Pancreas (tissue), 10 donors: ENCODE measurements at regions of chr11 and their contacts with region 1.

Region 1: DNA sequence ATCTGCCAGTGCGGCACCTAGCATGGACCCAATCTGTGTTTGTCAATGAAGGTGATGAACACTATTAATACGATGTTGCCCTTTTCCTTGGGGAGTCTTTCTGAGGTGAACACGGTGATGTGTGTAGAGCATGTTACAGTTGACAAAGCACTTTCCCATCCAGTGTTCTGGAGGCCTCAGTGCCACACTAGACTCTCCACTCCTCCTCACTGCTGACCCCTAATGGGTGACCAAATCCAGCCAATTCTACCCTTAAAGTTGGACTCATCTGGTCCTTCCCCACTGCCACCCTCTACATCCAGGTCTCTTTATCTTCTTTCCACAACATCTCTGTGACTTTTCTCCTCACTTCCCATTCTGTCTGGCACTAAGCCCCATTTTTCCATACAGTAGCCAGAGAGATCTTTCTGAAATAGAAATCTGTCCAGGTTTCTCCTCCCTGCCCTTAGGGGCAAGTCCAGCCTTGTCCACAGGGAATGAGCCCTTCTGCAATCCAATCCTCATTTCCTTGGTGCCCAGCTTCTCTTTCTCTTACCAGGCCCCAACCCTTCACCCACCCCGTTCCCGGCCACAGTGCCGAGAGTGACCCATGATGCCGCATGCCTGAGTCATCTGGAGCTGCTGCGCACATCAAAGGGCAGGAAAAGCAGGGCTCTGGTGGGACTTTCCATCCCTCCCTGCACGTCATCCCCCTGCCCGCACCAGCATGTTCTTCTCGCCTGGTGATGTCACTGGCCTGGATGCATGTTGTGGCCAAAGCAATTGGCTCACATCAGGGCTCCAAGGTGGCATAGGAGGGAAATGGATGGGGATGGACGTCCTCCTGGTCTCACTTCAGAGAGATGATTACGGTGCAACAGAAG is 64.2 kb downstream of the RASSF10 start:
- DNase-seq: no peak
- ATAC-seq: no peak
- H3K4me3 ChIP-seq: no peak overlapping the region
- H3K27ac ChIP-seq: no peak overlapping the region
- H3K4me1 ChIP-seq: no peaks in the 10 kb centered on the region
- H3K27me3 ChIP-seq: no peaks in the 10 kb centered on the region
- CTCF ChIP-seq: no peak

Region 2: GRCh38 chr11:13009921-13010748 is 63.2 kb before region 1 on chr11:
- intact Hi-C with region 1: loop called in 1 of 3 experiments (anchors 10 kb)
- DNase-seq: peak in 5 of 6 donors; percentile 20 to 75 (median 52)
- ATAC-seq: peak in 1 of 4 donors; percentile 14
- H3K4me3 ChIP-seq: peak overlapping the region in 2 of 4 donors; percentile 1 to 21
- H3K27ac ChIP-seq: no peak overlapping the region
- H3K4me1 ChIP-seq: peaks cover 21 to 33% (median 28%) of the 10 kb centered on the region in 3 donors
- H3K27me3 ChIP-seq: peaks cover 0 to 8% (median 2%) of the 10 kb centered on the region in 4 donors
- CTCF ChIP-seq: no peak